ENCODE measurements at regions of chr6 and their contacts with region 1.

Region 1: GRCh38 chr6:137697267-137697938 is 169.7 kb upstream of the TNFAIP3 start:
- DNase-seq: peak; percentile 25 to 28
- H3K4me3 ChIP-seq: no peak overlapping the region
- H3K4me1 ChIP-seq: no peaks in the 10 kb centered on the region
- H3K27me3 ChIP-seq: no peaks in the 10 kb centered on the region

Region 2: GRCh38 chr6:138109042-138109997 is 411.9 kb after region 1 on chr6:
- in situ Hi-C with region 1: loop called (anchors 10 kb)
- DNase-seq: peak; percentile 47 to 85
- H3K4me3 ChIP-seq: no peak overlapping the region
- H3K4me1 ChIP-seq: peaks cover 17% of the 10 kb centered on the region
- H3K27me3 ChIP-seq: no peaks in the 10 kb centered on the region; the same call in 1 of the 2 replicates

Region 3: DNA sequence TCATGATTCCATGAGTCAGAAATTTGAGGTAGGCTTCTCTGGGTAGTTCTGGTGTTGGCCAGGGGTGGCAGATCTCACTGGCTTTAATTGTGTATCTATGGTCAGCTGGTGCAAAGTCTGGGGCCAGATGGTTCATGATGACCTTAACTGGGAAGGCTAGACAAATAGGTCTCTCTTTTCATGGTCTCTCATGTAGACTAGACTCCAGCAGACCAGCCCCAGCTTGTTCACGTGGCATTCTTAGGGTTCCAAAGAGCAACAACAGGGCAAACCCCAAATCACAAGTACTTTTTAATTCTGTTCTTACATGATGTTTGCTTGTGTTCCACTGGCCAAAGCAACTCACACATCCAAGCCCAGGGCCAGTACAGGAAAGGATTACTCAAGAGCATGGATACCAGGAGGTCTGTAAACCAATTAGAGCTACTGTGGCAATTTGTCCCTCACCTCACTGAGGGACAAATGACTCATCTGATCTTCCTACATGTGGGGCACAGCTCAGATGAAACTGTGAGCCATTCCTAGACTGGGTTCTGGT is 600.4 kb after region 1 on chr6:
- in situ Hi-C with region 1: no loop called
- DNase-seq: no peak
- H3K4me3 ChIP-seq: no peak overlapping the region
- H3K4me1 ChIP-seq: no peaks in the 10 kb centered on the region
- H3K27me3 ChIP-seq: no peaks in the 10 kb centered on the region

Measured in HAP-1 (cell line).